ENCODE measurements at regions of chr10 and their contacts with region 1.

Region 1: GRCh38 chr10:101602761-101603398 is 14.8 kb downstream of the DPCD start:
- DNase-seq: peak; percentile 77
- ATAC-seq: peak; percentile 84 to 90

Region 2: GRCh38 chr10:102064868-102065560 is 462.1 kb after region 1 on chr10 and contains the start of gene HPS6:
- intact Hi-C with region 1: loop called in 1 of 2 experiments (anchors 10 kb)
- DNase-seq: peak; percentile 95
- ATAC-seq: peak; percentile 98
- total RNA-seq, gene HPS6: 10.1 to 12.1 TPM